ENCODE measurements at regions of chr4 and their contacts with region 1.

Region 1: GRCh38 chr4:145097821-145098674 is at the starts of genes ABCE1 and ANAPC10:
- DNase-seq: peak; percentile 94
- ATAC-seq: peak; percentile 94
- H3K4me3 ChIP-seq: peak within 1 kb of the TSS; percentile 71 to 91 (median 85)
- H3K27ac ChIP-seq: peak within 1 kb of the TSS; percentile 96
- H3K4me1 ChIP-seq: peaks cover 41% of the 10 kb centered on the region
- H3K27me3 ChIP-seq: no peaks in the 10 kb centered on the region; a peak in 1 of 5 replicates
- CTCF ChIP-seq: peak; percentile 47; the same call in 1 of the 2 replicates
- EP300 ChIP-seq: no peak
- POLR2A ChIP-seq: peak; percentile 90 to 97
- RAD21 ChIP-seq: 0 out of 2 replicates have a peak, but pooled peaks have one; percentile 9
- total RNA-seq, gene ABCE1: 139 and 226 TPM in 2 replicates
- total RNA-seq, gene ANAPC10: 32.7 and 37.8 TPM in 2 replicates

Region 2: GRCh38 chr4:145180298-145181090 is 82.4 kb after region 1 on chr4 and contains the start of gene OTUD4:
- CTCF ChIA-PET with region 1: no interaction called
- POLR2A ChIA-PET with region 1: interaction called, 10 read pairs
- in situ Hi-C with region 1: no loop called
- intact Hi-C with region 1: loop called (anchors 2 kb)
- DNase-seq: peak; percentile 87
- ATAC-seq: peak; percentile 92
- H3K4me3 ChIP-seq: peak within 1 kb of the TSS; percentile 76 to 84 (median 81)
- H3K27ac ChIP-seq: peak within 1 kb of the TSS; percentile 92
- H3K4me1 ChIP-seq: peaks cover 26% of the 10 kb centered on the region
- H3K27me3 ChIP-seq: peaks cover 0 to 4% of the 10 kb centered on the region in 2 experiments; a peak in 2 of 5 replicates
- CTCF ChIP-seq: peak; percentile 58
- EP300 ChIP-seq: no peak
- POLR2A ChIP-seq: peak; percentile 15 to 50; a peak in 1 of 4 replicates
- RAD21 ChIP-seq: no peak; the same call in 1 of the 2 replicates
- total RNA-seq, gene OTUD4: 16.1 and 21.1 TPM in 2 replicates

Region 3: DNA sequence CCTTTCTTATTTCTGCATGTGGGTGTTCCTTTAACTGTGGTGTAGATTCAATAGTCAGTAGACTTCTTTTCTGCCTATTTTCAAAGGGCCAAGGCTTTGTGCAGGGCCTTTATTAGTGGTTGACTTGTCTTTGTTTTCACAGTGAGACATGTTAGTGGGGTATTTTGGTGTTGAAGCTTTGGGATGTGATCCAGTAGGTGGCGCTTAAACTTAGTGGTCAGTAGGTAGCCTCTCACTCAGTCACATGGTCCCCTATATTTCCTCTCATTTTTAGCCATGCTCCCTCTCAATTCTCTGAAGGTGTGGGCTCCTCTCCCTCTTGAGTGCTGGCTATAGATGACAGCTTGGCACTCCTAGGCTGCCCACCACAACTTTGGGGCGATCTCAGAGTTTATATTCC is 1447.1 kb after region 1 on chr4:
- CTCF ChIA-PET with region 1: no interaction called
- POLR2A ChIA-PET with region 1: no interaction called
- in situ Hi-C with region 1: no loop called
- intact Hi-C with region 1: no loop called
- DNase-seq: peak; percentile 27
- ATAC-seq: peak; percentile 94
- H3K4me3 ChIP-seq: no peak overlapping the region
- H3K27ac ChIP-seq: no peak overlapping the region
- H3K4me1 ChIP-seq: no peaks in the 10 kb centered on the region
- H3K27me3 ChIP-seq: no peaks in the 10 kb centered on the region
- CTCF ChIP-seq: peak; percentile 54
- EP300 ChIP-seq: no peak
- POLR2A ChIP-seq: no peak
- RAD21 ChIP-seq: peak; percentile 26; the same call in 1 of the 2 replicates